ENCODE measurements at regions of chr12 and their contacts with region 1.

Region 1: DNA sequence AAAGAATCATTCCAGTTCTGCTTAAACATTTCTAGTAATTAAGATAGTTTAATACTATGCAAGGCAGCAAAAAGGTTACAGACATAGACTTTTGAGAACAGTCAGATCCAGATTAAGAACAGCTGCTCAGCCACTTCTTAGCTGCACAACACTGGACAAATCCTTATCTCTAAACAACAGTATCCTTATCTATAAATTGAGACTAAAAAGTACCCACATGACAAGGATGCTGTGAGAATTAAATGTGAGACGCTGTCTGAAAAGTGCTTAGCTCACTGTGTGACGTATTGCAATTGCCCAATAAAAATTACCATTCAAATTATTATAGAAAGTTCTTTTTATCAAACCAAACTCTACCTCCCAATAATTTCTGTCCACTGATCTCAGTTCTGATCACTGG is 35.5 kb downstream of the BORCS5 start:
- DNase-seq: no peak
- ATAC-seq: no peak
- H3K4me3 ChIP-seq: no peak overlapping the region
- H3K27ac ChIP-seq: no peak overlapping the region
- H3K4me1 ChIP-seq: peaks cover 4 to 15% of the 10 kb centered on the region in 2 donors
- H3K27me3 ChIP-seq: no peaks in the 10 kb centered on the region
- CTCF ChIP-seq: no peak
- POLR2A ChIP-seq: no peak

Region 2: DNA sequence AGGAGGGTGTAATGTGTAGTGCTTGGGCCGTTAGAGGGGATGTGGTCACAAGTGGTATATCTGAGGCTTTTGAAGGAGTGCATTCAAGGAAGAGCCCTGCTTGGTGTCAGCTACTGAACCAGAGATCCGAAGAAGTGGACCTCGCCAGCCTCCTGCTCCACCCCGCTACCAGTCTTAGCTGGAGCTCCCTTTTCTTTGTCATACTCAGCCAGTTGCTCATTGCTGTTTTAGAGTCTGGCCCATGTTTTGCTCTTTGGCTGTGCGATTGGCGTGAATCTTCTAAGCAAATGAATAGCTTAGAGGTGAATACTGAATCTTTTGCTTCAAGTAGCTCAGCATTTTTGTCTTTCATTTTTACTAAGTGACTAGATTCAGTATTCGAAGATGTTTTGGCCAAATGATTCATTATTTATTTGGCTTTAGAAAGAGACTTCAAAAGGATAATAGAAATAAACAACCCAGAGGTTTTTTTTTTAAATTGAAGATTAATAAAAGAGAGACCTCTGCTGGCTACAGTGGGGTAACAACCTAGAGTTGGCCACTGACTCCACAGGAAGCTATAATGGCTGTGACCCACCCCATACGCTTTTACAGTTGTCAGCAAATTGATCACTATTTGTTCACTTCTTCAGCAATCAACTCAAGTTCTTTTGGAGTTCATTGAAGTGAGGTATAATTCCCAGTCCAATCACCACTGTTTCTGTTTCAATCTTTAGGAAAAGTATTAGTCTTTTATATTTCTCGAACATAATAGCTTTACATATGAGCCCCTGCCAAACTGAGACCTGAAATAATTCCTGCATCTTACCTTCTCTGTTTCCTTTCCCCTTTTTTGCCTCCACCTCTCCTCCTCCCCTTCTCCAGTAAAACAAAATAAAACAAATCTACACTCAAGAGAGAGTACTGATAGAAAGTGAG is 344.6 kb after region 1 on chr12:
- in situ Hi-C with region 1: no loop called
- intact Hi-C with region 1: loop called (anchors 5 kb)
- DNase-seq: no peak
- ATAC-seq: peak; percentile 83 to 86
- H3K4me3 ChIP-seq: peak overlapping the region in 2 of 4 donors; percentile 1 to 35
- H3K27ac ChIP-seq: peak overlapping the region; percentile 28 to 47 (median 44)
- H3K4me1 ChIP-seq: peaks cover 5 to 16% of the 10 kb centered on the region in 2 donors
- H3K27me3 ChIP-seq: no peaks in the 10 kb centered on the region
- CTCF ChIP-seq: peak in 4 of 5 experiments; percentile 35 to 65 (median 50)
- POLR2A ChIP-seq: no peak

Measured in gastrocnemius medialis (tissue), 4 donors.